ENCODE measurements at regions of chr11 and their contacts with region 1.

Region 1: GRCh38 chr11:59186130-59186594 is 14.2 kb downstream of the DTX4 start:
- H3K4me3 ChIP-seq: no peak overlapping the region
- H3K27ac ChIP-seq: no peak overlapping the region
- H3K4me1 ChIP-seq: no peaks in the 10 kb centered on the region
- CTCF ChIP-seq: no peak

Region 2: GRCh38 chr11:59197991-59198390 is 11.8 kb after region 1 on chr11:
- CTCF ChIA-PET with region 1: interaction called, 48 read pairs
- POLR2A ChIA-PET with region 1: no interaction called
- H3K4me3 ChIP-seq: no peak overlapping the region
- H3K27ac ChIP-seq: no peak overlapping the region
- H3K4me1 ChIP-seq: no peaks in the 10 kb centered on the region
- CTCF ChIP-seq: no peak

Region 3: GRCh38 chr11:59207988-59208451 is 21.9 kb after region 1 on chr11:
- CTCF ChIA-PET with region 1: interaction called, 48 read pairs
- POLR2A ChIA-PET with region 1: no interaction called
- H3K4me3 ChIP-seq: no peak overlapping the region
- H3K27ac ChIP-seq: no peak overlapping the region
- H3K4me1 ChIP-seq: no peaks in the 10 kb centered on the region
- CTCF ChIP-seq: peak; percentile 43; the same call in 1 of the 2 replicates

Measured in HEK293 (cell line).